OCI-LY7 (cell line): ENCODE measurements at regions of chr2 and their contacts with region 1.

Region 1: DNA sequence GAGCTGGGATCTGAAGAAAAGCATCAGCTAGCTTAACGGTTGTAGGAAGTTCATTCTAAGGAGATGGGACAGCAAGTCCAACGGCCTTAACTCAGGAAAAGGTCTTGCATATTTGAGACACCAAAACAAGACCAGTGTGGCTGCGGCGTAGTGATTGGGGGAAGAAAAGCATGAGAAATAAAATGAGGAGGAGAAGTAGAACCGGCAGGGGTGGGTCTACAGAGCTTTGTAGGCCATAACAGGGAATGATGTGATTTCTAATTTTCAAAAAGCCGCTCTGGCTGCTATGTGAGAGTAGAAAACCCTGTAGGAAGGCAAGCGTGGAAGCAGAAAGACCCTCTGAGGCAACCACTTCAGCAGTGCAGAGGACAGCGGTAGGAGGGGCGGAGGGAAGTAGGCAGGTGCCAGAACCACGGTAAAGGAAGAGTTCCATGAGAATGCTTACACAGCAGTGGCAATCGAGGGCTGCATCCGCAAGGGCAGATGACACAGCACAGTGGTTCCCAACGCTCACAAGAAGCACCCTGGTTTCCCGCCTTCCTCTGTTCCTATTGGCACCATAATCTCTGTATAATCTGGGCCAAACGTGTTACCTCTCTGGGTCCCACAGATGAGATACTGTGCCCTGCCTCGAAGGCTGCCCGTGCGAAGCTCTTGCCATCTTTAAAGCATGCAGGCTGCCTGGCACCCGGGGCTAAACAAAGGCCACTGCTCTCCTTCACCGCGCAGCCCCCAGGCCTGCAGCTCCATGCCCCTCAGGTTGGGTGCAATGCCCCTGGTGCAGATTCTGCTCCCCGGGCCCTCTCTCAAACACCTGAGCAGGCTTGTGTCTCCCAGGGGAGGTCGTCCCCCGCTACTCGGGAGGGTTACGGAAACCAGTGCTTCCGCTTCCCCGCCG is 791 bp downstream of the ANKRD39 start:
- DNase-seq: peak; percentile 81
- H3K4me3 ChIP-seq: peak overlapping the region; percentile 77
- H3K27ac ChIP-seq: peak overlapping the region; percentile 62
- H3K4me1 ChIP-seq: peaks cover 14% of the 10 kb centered on the region
- CTCF ChIP-seq: no peak

Region 2: GRCh38 chr2:96638144-96639121 is 218.6 kb before region 1 on chr2 and contains the start of gene KANSL3:
- CTCF ChIA-PET with region 1: no interaction called
- POLR2A ChIA-PET with region 1: no interaction called
- intact Hi-C with region 1: loop called (anchors 5 kb)
- DNase-seq: peak; percentile 95
- H3K4me3 ChIP-seq: peak within 1 kb of the TSS; percentile 99
- H3K27ac ChIP-seq: peak within 1 kb of the TSS; percentile 44
- H3K4me1 ChIP-seq: peaks cover 31% of the 10 kb centered on the region
- CTCF ChIP-seq: no peak
- total RNA-seq, gene KANSL3: 40.4 and 46.4 TPM in 2 replicates

Region 3: GRCh38 chr2:96816128-96816835 is 40.7 kb before region 1 on chr2 and contains the start of gene CNNM3:
- CTCF ChIA-PET with region 1: no interaction called
- POLR2A ChIA-PET with region 1: interaction called, 3 read pairs
- intact Hi-C with region 1: loop called (anchors 2 kb)
- DNase-seq: peak; percentile 94
- H3K4me3 ChIP-seq: peak within 1 kb of the TSS; percentile 90
- H3K27ac ChIP-seq: peak within 1 kb of the TSS; percentile 58
- H3K4me1 ChIP-seq: peaks cover 46% of the 10 kb centered on the region
- CTCF ChIP-seq: peak; percentile 61
- total RNA-seq, gene CNNM3: 9.1 and 13.5 TPM in 2 replicates

Region 4: GRCh38 chr2:96951093-96951654 is 94.1 kb after region 1 on chr2:
- CTCF ChIA-PET with region 1: interaction called, 3 read pairs
- POLR2A ChIA-PET with region 1: interaction called, 3 read pairs
- intact Hi-C with region 1: loop called (anchors 1 kb)
- DNase-seq: peak; percentile 75
- H3K4me3 ChIP-seq: no peak overlapping the region
- H3K27ac ChIP-seq: no peak overlapping the region
- H3K4me1 ChIP-seq: no peaks in the 10 kb centered on the region
- CTCF ChIP-seq: peak; percentile 88

Region 5: GRCh38 chr2:96960153-96960961 is 103.3 kb after region 1 on chr2:
- CTCF ChIA-PET with region 1: interaction called, 3 read pairs
- POLR2A ChIA-PET with region 1: interaction called, 3 read pairs
- intact Hi-C with region 1: loop called (anchors 1 kb)
- DNase-seq: peak; percentile 83
- H3K4me3 ChIP-seq: no peak overlapping the region
- H3K27ac ChIP-seq: no peak overlapping the region
- H3K4me1 ChIP-seq: peaks cover 24% of the 10 kb centered on the region
- CTCF ChIP-seq: peak; percentile 96